Dorsolateral prefrontal cortex (tissue), 120 donors: ENCODE measurements at regions of chr4 and their contacts with region 1.

Region 1: DNA sequence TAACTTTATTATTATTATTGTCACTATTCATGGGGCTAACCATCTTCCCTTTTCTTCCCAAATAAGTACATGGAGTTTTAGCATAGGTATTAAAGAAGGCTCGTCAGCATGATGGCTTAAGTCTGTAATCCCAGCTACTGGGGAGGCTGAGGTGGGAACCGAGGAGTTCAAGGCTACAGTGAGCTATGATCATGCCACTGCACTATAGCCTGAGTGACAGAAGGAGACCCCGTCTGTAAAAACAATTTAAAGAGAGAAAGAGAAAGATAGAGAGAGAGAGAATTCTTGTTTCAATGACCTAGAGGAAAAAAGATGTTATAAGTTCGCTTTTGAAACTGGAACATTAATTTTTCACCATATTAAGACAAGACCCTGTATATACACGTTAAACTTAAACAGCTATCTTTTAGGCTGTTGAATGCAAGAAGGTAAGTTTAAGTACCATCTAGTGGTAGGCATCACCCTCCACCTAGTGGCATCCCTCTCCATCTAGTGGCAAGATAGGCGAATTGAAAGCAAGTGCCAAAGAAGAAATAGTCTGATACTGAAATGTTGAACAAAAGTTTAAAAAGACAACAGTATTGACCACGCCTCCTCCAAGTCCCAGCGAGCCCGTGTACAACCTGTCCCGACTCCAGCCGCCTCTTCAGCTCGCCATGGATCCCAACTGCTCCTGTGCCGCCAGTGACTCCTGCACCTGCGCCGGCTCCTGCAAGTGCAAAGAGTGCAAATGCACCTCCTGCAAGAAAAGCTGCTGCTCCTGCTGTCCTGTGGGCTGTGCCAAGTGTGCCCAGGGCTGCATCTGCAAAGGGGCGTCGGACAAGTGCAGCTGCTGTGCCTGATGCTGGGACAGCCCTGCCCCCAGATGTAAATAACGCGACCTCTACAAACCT is 26.0 kb upstream of the YTHDC1 start:
- DNase-seq: peak in 5 of 10 donors; percentile 4 to 52 (median 35)
- H3K4me3 ChIP-seq: peak overlapping the region in 25 of 59 donors; percentile 6 to 50 (median 31)
- H3K27ac ChIP-seq: no peak overlapping the region
- H3K27me3 ChIP-seq: peaks cover 0 to 34% (median 4%) of the 10 kb centered on the region in 45 donors
- CTCF ChIP-seq: peak; percentile 68 to 95 (median 85)

Region 2: DNA sequence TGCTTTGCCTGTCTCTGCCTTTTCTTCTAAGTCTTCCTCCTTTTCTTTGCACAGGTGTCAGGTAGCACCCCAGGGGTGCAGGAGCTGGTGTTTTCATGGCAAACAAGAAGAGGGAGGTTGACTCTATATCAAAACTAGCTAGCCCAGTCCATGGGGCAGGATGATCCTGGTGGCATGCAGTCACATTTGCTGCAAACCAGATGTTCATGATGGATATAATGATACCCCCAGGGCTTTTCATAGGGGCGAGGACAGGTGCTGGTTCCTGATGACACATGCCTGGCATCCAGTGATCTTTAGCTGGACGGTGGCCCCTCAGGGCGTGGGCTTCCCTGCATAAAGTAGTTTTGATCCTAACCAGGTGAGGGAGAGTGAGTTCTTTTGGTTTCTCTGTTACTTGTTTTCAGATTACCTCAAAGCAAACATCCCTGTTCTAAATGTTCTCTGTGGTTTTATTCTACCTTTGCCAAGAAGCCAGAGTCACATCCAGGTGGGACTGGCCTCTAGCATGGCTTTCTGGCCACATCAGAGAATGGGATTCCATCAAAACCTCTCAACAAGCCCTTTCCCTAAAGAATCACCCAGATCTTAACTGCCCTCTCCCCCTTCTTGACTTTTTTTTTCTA is 663.8 kb before region 1 on chr4:
- intact Hi-C with region 1: no loop called
- DNase-seq: no peak
- H3K4me3 ChIP-seq: no peak overlapping the region
- H3K27ac ChIP-seq: no peak overlapping the region
- H3K27me3 ChIP-seq: no peaks in the 10 kb centered on the region
- CTCF ChIP-seq: no peak

Region 3: DNA sequence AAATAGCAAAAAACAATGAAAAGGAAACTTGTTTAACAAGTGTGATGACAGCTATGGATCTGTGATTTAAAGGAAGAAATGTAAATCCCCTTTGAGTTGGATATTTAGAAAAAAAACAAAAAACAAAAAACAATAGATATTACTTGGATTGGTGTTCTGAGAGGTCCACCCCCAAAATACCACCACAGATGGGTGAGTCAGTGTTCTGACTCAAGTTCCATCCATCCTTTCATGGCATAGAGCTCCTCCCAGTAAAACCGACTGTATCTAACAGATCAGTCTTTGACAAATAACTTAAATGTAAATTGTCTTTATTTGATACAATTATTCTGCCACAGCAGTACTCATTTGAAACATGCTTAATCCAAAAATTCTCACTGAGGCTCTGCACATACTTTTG is 157.9 kb before region 1 on chr4:
- intact Hi-C with region 1: no loop called
- DNase-seq: no peak
- H3K4me3 ChIP-seq: no peak overlapping the region
- H3K27ac ChIP-seq: no peak overlapping the region
- H3K27me3 ChIP-seq: peaks cover 0 to 12% (median 0%) of the 10 kb centered on the region in 45 donors
- CTCF ChIP-seq: no peak

Region 4: DNA sequence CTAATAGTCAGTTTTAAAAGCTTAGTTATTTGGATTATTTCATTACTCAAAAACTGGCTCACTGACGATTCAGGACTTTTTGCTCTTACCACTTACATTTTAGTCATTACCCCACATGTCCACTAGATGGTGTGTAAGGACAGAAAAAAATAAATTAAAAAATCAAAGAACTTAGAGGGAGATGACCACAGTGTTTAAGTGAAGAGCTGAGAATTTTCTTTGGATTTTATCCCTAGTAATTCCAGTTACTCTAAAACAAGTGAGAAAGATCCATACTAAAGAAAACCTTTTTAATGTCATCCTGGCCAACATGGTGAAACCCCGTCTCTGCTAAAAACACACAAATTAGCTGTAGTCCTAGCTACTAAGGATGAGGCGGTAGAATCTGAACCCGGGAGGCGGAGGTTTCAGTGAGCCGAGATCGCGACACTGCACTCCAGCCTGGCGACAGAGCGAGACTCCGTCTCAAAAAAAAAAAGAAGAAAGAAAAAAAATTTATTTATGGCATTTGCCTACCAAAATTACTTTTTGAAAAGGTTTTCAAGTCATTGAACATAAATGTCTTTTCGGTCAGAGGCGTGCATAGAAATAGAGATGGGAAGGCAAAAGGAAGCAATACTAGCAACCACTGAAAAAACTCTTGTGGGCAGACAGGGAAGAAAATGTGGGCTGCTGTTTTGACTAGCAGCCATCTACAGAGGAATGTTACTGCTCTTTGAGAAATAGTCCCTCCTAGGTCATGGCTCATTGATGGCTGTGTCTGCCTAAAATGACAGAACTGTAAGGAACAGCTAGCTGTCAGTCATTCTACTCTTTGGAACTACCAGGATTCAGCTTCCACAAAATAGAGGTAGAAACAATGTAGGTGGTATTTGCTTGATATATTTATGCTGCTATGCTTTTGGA is 103.8 kb before region 1 on chr4:
- intact Hi-C with region 1: loop called (anchors 1 to 5 kb)
- DNase-seq: peak in 1 of 10 donors; percentile 4
- H3K4me3 ChIP-seq: peak overlapping the region in 47 of 59 donors; percentile 3 to 58 (median 30)
- H3K27ac ChIP-seq: no peak overlapping the region
- H3K27me3 ChIP-seq: peaks cover 0 to 9% (median 0%) of the 10 kb centered on the region in 45 donors
- CTCF ChIP-seq: peak; percentile 75 to 96 (median 87)

Region 5: DNA sequence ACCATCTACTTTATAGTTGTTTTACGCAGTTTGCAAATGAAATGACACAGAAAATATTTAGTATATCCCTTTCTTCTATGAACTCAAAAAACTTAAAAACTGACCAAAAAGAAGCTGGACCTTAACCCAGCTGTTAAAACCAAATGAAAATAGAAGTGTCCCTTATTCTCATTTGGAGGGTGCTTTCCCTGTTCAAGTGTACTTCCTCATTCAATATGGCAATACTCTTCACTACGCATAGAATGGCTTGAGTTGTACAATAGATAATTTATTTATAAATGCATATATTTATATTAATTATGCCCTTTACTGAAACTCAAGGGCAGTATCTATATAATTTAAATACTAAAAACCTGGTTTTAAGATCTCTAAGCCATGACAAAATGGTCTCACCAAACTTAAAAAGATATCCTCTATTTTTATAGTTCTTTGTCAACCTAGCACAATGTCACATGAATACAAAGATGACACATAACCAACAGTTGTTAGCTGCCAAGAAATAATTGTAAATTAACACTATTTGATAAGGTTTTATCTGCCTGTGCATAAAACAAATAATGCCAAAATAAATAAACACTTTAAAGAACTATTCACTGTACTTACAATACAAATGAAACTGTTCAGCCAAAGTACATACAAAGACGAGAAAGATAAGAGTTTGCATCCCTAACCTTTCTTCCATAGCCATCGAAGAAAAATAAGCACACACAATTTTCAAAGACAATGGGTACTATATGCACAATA is 51.2 kb before region 1 on chr4:
- intact Hi-C with region 1: loop called in 1 of 2 experiments (anchors 10 kb)
- DNase-seq: no peak
- H3K4me3 ChIP-seq: no peak overlapping the region
- H3K27ac ChIP-seq: peak overlapping the region in 5 of 59 donors; percentile 2 to 27 (median 4)
- H3K27me3 ChIP-seq: no peaks in the 10 kb centered on the region
- CTCF ChIP-seq: no peak

Region 6: DNA sequence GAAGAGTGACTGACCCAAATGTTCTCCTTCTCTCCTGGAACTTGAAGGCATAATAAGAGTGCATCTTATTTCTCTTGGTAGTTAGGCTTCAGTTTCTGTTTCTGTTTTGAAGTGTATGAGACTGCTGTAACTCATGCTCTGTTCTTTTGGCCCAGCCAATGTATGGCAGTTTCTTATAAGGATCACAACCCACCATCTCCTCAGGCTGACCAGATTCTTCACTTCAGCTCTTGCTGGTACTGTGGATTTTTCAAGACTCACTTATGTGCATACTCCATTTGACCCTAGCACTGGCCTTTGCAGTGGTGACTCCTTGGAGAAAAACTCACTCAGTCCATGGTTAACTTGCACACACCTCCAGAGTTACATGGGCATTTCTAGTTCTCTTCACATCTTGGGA is 16.4 kb before region 1 on chr4:
- intact Hi-C with region 1: no loop called
- DNase-seq: no peak
- H3K4me3 ChIP-seq: no peak overlapping the region
- H3K27ac ChIP-seq: no peak overlapping the region
- H3K27me3 ChIP-seq: no peaks in the 10 kb centered on the region
- CTCF ChIP-seq: no peak

Region 7: GRCh38 chr4:68617003-68617698 is 241.2 kb after region 1 on chr4:
- intact Hi-C with region 1: no loop called
- DNase-seq: no peak
- H3K4me3 ChIP-seq: no peak overlapping the region
- H3K27ac ChIP-seq: no peak overlapping the region
- H3K27me3 ChIP-seq: peaks cover 0 to 6% (median 0%) of the 10 kb centered on the region in 45 donors
- CTCF ChIP-seq: no peak